ENCODE measurements at regions of chr18 and their contacts with region 1.

Region 1: GRCh38 chr18:11710578-11710977 is 21.5 kb downstream of the GNAL start:
- DNase-seq: no peak
- ATAC-seq: no peak

Region 2: DNA sequence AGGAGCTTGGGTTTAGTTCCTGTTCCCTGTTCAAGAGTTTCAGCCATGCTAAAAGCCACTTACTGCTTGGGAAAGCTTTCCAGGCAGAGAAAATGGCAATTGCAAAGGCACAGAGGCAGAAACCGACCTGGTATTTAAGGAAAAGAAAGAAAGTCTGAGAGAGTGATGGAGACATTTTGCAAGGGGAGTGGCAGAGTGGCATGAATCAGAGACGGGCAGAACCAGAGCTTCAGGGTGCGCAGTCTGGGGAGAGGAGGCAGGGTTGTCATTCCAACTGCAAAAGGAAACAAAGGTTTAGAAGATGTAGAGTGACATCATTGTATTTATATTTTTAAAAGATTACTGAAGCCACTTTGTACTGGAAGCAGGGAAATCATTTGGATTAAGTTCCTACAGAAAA is 36.5 kb before region 1 on chr18:
- intact Hi-C with region 1: loop called (anchors 2 kb)
- DNase-seq: no peak
- ATAC-seq: no peak